ENCODE measurements at regions of chr10 and their contacts with region 1.

Region 1: GRCh38 chr10:44973327-44974059 is 5.1 kb downstream of the DEPP1 start:
- DNase-seq: no peak
- ATAC-seq: no peak
- H3K4me3 ChIP-seq: no peak overlapping the region
- H3K4me3 Mint-ChIP-seq: no peak overlapping the region
- H3K27ac ChIP-seq: no peak overlapping the region
- H3K27ac Mint-ChIP-seq: no peak overlapping the region
- H3K4me1 ChIP-seq: peaks cover 11 to 45% of the 10 kb centered on the region in 2 experiments
- H3K4me1 Mint-ChIP-seq: peaks cover 18 to 30% (median 19%) of the 10 kb centered on the region in 3 donors
- H3K27me3 ChIP-seq: peaks cover 0 to 18% of the 10 kb centered on the region in 2 experiments
- H3K27me3 Mint-ChIP-seq: no peaks in the 10 kb centered on the region

Region 2: GRCh38 chr10:44913350-44914081 is 60.0 kb before region 1 on chr10:
- CTCF ChIA-PET with region 1: no interaction called
- POLR2A ChIA-PET with region 1: no interaction called
- DNase-seq: peak in 29 of 35 experiments; percentile 6 to 68 (median 39)
- ATAC-seq: peak; percentile 52 to 79 (median 72)
- H3K4me3 ChIP-seq: peak overlapping the region in 1 of 2 donors; percentile 29
- H3K4me3 Mint-ChIP-seq: peak overlapping the region in 2 of 3 donors; percentile 39 to 73
- H3K27ac ChIP-seq: no peak overlapping the region
- H3K27ac Mint-ChIP-seq: peak overlapping the region; percentile 44 to 88
- H3K4me1 ChIP-seq: peaks cover 10 to 14% of the 10 kb centered on the region in 2 experiments
- H3K4me1 Mint-ChIP-seq: peaks cover 13 to 15% (median 15%) of the 10 kb centered on the region in 3 donors
- H3K27me3 ChIP-seq: peaks cover 0 to 20% of the 10 kb centered on the region in 2 experiments
- H3K27me3 Mint-ChIP-seq: peaks cover 0 to 9% of the 10 kb centered on the region in 2 donors

Region 3: GRCh38 chr10:44932517-44933450 is 40.7 kb before region 1 on chr10:
- CTCF ChIA-PET with region 1: interaction called, 10 to 12 read pairs
- POLR2A ChIA-PET with region 1: no interaction called
- DNase-seq: peak; percentile 34 to 84 (median 73)
- ATAC-seq: peak; percentile 83 to 96 (median 90)
- H3K4me3 ChIP-seq: no peak overlapping the region
- H3K4me3 Mint-ChIP-seq: no peak overlapping the region
- H3K27ac ChIP-seq: no peak overlapping the region
- H3K27ac Mint-ChIP-seq: no peak overlapping the region
- H3K4me1 ChIP-seq: peaks cover 8 to 13% of the 10 kb centered on the region in 2 experiments
- H3K4me1 Mint-ChIP-seq: peaks cover 6 to 7% (median 6%) of the 10 kb centered on the region in 3 donors
- H3K27me3 ChIP-seq: peaks cover 0 to 25% of the 10 kb centered on the region in 2 experiments
- H3K27me3 Mint-ChIP-seq: no peaks in the 10 kb centered on the region

Region 4: GRCh38 chr10:44958196-44958897 is 15.1 kb before region 1 on chr10:
- CTCF ChIA-PET with region 1: interaction called in 1 of 2 experiments, 19 read pairs
- POLR2A ChIA-PET with region 1: interaction called in 1 of 2 experiments, 7 read pairs
- DNase-seq: peak in 1 of 35 experiments; percentile 12
- ATAC-seq: no peak
- H3K4me3 ChIP-seq: peak overlapping the region; percentile 74 to 82
- H3K4me3 Mint-ChIP-seq: peak overlapping the region; percentile 82 to 85 (median 83)
- H3K27ac ChIP-seq: no peak overlapping the region
- H3K27ac Mint-ChIP-seq: peak overlapping the region; percentile 7 to 80
- H3K4me1 ChIP-seq: peaks cover 5 to 24% of the 10 kb centered on the region in 2 experiments
- H3K4me1 Mint-ChIP-seq: peaks cover 29 to 36% (median 35%) of the 10 kb centered on the region in 3 donors
- H3K27me3 ChIP-seq: peaks cover 0 to 3% of the 10 kb centered on the region in 2 experiments
- H3K27me3 Mint-ChIP-seq: peaks cover 0 to 4% of the 10 kb centered on the region in 2 donors